ENCODE measurements at regions of chr20 and their contacts with region 1.

Region 1: DNA sequence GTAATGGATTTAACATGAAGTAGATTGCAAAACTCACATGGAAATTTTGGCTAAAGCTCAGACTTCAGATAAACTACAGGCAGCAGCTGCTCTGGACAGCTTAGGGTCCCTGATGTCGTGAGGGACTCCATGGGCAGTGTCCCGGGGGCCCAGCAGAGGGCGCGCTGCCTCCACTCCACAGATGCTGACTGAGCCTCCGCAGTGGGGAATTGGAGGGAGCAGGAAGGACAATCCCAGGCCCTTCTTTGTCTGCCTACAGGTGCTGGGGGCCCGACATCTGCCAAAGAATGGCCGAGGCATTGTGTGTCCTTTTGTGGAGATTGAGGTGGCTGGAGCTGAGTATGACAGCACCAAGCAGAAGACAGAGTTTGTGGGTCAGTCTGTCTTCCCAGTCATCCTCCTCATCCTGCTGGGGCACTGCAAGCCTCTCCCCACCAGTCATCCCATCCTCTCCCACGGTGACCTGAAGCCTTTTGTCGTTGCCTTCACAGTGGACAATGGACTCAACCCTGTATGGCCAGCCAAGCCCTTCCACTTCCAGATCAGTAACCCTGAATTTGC is 35.9 kb downstream of the PLCG1 start:
- DNase-seq: peak; percentile 79 to 84
- H3K4me3 ChIP-seq: no peak overlapping the region
- H3K27ac ChIP-seq: peak overlapping the region; percentile 8 to 71 (median 13)
- H3K4me1 ChIP-seq: peaks cover 3 to 33% of the 10 kb centered on the region in 2 donors
- H3K27me3 ChIP-seq: no peaks in the 10 kb centered on the region
- CTCF ChIP-seq: peak; percentile 76 to 96 (median 92)
- POLR2A ChIP-seq: no peak

Region 2: DNA sequence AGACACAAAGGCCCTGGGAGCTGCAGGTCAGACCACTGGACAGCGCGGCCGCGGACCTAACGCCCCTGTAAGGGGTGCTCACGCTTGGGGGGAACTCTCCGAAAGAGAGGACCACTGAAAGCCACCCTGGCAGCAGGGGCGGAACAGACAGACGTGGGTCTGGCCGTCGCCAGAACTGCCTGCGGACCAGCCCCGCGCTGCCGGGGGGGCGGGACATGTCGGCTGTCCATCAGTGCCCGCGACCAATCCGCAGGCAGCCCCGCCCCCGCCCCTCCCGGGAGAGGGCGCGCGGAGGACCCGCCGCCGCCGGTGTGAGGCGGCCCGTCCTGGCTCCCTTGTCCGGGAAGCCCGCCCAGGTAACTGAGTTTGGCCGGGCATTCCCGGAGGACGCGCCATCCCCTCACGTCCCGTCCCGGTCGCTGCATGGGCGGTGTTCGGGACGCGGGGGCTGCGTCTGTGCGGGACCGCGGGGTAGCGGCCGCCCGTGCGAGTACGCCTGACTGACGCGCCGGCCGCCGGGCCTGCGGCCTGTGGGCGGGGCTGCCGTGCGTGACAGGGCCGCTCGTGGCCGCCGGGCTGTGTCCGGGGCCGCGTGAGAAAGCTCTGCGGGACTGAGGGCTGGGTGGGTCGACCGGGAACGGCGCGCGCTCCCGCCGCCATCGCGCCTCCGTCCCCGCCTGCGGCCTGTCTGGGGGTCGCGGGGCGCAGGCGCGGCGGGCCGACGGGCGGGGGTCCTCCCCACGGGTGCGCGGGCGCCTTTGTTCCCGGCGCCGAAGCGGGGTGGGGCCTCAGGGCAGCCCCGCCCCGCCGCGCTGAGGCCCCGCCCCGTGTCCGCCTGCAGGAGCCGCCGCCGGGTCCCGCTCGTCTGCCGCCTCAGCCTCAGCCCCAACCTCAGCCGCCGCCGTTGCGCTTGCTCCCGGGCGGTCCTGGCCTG is 36.3 kb before region 1 on chr20 and contains the start of gene PLCG1:
- intact Hi-C with region 1: loop called (anchors 5 kb)
- DNase-seq: peak; percentile 93
- H3K4me3 ChIP-seq: peak within 1 kb of the TSS; percentile 73 to 93 (median 93)
- H3K27ac ChIP-seq: peak within 1 kb of the TSS; percentile 89 to 98 (median 96)
- H3K4me1 ChIP-seq: peaks cover 36 to 38% of the 10 kb centered on the region in 2 donors
- H3K27me3 ChIP-seq: no peaks in the 10 kb centered on the region
- CTCF ChIP-seq: peak in 2 of 6 experiments; percentile 1 to 23
- POLR2A ChIP-seq: peak; percentile 71 to 89
- total RNA-seq, gene PLCG1: 146 to 252 (median 164) TPM

Region 3: DNA sequence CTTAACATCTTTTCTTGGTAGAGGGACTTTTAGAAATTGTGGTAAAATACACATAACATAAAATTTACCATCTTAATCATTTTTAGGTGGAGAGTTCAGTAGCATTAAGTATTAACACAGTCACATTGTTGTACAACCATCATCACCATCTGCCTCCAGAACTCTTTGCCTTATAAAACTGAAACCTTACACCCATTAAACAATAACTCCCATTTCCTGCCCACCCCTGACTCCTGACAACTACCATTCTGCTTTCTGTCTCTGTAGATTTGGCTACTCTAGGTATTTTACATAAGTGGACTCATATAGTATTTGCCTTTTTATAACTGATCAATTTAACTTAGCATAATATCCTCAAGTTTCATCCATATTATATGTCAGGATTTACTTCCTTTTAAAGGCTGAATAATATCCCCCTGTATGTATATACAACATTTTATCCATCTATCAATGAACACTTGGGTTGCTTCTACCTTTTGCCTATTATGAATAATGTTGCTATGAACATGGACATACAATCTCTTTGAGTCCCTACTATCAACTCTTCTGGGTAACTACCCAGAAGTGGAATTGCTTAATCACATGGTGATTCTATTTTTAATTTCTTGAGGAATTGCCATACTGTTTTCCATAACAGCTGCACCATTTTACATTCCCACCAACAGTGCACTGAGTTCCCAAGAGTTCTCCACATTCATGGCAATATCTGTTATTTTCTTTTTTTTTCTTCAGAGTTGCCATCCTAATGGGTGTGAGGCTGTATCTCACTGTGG is 55.8 kb after region 1 on chr20:
- intact Hi-C with region 1: loop called (anchors 5 kb)
- DNase-seq: no peak
- H3K4me3 ChIP-seq: no peak overlapping the region
- H3K27ac ChIP-seq: no peak overlapping the region
- H3K4me1 ChIP-seq: peaks cover 17 to 25% of the 10 kb centered on the region in 2 donors
- H3K27me3 ChIP-seq: no peaks in the 10 kb centered on the region
- CTCF ChIP-seq: no peak
- POLR2A ChIP-seq: no peak

Region 4: DNA sequence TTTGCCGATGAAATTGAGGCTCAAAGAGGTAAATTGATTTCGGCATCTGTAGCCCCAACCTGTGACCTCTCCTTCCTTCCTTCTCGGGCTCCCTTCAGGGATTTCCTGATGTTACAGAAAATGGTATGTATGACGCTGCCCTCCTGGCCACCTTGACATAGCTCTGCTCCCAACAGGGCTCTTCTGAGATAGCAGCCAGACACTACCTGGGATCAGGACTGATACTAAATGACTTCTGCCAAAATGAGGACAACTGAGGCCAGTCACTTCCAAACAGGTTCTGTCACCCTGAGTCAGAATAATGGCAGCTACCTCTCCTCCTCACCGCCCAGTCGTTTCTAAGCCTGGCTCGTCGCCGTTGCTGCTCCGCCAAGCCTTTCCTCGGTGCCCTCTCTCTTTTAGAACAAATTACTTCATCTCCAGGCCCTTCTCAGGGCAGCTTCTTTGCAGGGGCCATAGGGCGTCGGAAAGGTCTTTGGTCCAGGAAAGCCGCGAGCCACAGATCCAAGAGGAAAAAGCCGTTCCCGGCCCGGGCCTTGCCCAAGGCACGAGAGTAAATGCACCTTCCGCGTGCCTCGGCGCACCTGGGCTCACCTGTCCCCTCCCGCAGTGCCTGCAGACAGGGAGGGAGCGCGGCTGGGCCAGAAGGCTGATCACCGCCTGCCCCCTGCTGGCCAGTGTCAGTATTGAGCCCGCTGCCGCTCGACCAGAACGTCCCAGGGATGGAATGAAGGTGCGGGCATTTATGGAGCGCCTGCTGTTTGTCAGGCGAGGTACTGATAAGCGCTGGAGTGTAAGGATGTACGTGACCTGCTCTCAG is 166.5 kb after region 1 on chr20:
- intact Hi-C with region 1: loop called (anchors 2 kb)
- DNase-seq: peak; percentile 90 to 93
- H3K4me3 ChIP-seq: peak overlapping the region in 1 of 3 donors; percentile 22
- H3K27ac ChIP-seq: peak overlapping the region; percentile 21 to 84 (median 81)
- H3K4me1 ChIP-seq: peaks cover 25 to 50% of the 10 kb centered on the region in 2 donors
- H3K27me3 ChIP-seq: no peaks in the 10 kb centered on the region
- CTCF ChIP-seq: peak; percentile 97 to 99 (median 99)
- POLR2A ChIP-seq: peak in 1 of 2 donors; percentile 28

Region 5: DNA sequence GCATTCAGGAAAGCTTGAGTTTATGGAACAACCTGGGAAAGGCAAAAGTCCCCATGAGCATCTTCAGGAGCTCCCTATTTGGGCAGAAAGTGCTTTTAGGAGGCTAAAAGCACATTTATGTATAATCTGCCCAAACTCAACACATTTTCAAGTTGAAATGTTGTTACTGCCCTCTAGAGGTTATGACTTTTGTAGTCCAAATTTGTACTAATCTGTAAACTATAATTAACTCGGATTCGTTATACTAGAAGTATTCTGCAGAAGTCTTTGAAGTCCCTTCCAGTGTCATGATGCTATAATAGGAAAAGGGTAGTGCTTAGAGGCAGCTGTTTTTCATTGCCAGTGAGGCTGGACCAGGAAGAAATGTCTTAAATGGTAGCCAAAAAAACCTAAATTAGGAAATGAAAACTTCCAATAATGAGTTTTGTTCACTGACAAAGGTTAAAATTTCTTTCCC is 238.2 kb after region 1 on chr20:
- intact Hi-C with region 1: loop called (anchors 10 kb)
- DNase-seq: no peak
- H3K4me3 ChIP-seq: no peak overlapping the region
- H3K27ac ChIP-seq: no peak overlapping the region
- H3K4me1 ChIP-seq: no peaks in the 10 kb centered on the region
- H3K27me3 ChIP-seq: no peaks in the 10 kb centered on the region
- CTCF ChIP-seq: peak in 5 of 6 experiments; percentile 11 to 43 (median 28)
- POLR2A ChIP-seq: no peak

Region 6: GRCh38 chr20:41767001-41767400 is 593.8 kb after region 1 on chr20:
- intact Hi-C with region 1: no loop called
- DNase-seq: no peak
- H3K4me3 ChIP-seq: no peak overlapping the region
- H3K27ac ChIP-seq: no peak overlapping the region
- H3K4me1 ChIP-seq: no peaks in the 10 kb centered on the region
- H3K27me3 ChIP-seq: no peaks in the 10 kb centered on the region
- CTCF ChIP-seq: no peak
- POLR2A ChIP-seq: no peak

Measured in thyroid gland (tissue), 4 donors.